Upper lobe of right lung (tissue), 1 donor: ENCODE measurements at regions of chr12 and their contacts with region 1.

Region 1: GRCh38 chr12:2583091-2583497 is 211.7 kb upstream of the FKBP4 start:
- DNase-seq: peak; percentile 84
- ATAC-seq: peak; percentile 93
- H3K4me3 ChIP-seq: no peak overlapping the region
- H3K27ac ChIP-seq: no peak overlapping the region
- H3K4me1 ChIP-seq: peaks cover 6% of the 10 kb centered on the region
- H3K27me3 ChIP-seq: peaks cover 4% of the 10 kb centered on the region
- CTCF ChIP-seq: peak; percentile 88

Region 2: GRCh38 chr12:2057041-2057794 is 525.9 kb before region 1 on chr12:
- intact Hi-C with region 1: loop called (anchors 10 kb)
- DNase-seq: no peak
- ATAC-seq: peak; percentile 17
- H3K4me3 ChIP-seq: no peak overlapping the region
- H3K27ac ChIP-seq: no peak overlapping the region
- H3K4me1 ChIP-seq: peaks cover 13% of the 10 kb centered on the region
- H3K27me3 ChIP-seq: peaks cover 34% of the 10 kb centered on the region
- CTCF ChIP-seq: peak; percentile 63

Region 3: DNA sequence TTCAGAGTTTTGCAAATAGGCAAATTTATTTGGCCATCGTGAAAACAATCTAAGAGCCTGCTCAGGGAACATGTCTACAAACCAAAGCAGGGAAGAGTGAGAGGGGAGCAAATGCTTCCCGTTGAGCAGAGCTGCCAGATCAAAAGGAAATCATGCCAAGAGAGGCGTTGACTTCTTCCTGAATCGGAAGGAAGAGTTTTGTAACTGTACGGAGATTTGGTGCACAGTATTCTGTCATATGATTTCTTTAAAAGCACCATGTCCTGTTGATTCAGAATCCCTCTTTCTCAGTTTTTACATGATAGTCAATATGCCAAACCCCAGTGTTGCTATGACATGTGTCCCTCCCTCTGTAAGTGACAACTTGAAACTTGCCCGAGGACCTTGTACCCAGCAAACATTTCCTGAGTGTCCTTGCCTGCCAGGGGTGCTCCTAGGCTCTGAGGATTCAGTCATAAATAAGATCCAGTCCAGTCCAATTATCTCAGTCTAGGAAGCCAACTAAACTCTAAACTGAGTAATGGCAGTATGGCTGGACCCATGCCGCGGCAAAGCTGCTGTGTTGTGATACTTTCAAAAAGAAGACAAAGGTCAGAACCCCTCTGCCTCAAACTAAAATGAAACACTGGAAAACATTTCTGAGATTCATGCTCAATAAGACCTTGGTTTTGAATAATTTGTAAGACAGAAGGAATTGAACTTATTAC is 88.5 kb before region 1 on chr12:
- intact Hi-C with region 1: no loop called
- DNase-seq: no peak
- ATAC-seq: peak; percentile 75
- H3K4me3 ChIP-seq: no peak overlapping the region
- H3K27ac ChIP-seq: peak overlapping the region; percentile 52
- H3K4me1 ChIP-seq: peaks cover 30% of the 10 kb centered on the region
- H3K27me3 ChIP-seq: no peaks in the 10 kb centered on the region
- CTCF ChIP-seq: no peak

Region 4: DNA sequence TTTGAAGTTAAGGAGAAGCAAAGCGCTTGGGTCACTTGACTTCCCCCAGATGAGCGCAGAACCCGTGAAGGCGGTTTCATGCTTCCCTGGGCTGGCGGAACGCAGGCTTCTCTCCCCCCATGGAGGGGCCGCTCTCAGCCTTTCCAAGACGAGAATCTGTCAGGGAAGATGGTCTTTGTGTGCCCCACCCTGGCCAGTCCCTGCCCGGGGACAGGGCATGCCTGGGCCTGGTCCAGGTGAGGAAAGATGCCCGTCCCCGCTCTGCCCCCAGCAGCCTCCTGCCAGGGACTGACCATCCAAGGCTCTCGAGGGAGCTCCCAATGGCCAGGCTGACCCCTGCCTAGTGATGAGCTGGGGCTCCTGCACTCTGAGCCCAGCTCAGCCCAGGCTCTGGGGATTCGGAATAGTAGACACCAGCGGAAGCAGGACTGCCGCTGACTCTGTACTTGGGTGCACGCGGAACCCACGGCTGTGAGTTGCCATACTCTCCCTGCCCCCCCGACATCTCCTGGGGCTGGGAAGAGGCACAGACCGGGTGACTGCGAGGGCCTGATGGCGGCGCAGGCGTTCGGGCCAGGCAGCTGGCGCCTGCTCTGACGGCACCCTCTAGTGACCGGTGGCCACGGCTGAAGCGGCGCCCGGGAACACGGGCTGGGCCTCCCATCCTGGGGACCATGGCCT is 69.4 kb after region 1 on chr12:
- intact Hi-C with region 1: no loop called
- DNase-seq: peak; percentile 25
- ATAC-seq: peak; percentile 7
- H3K4me3 ChIP-seq: no peak overlapping the region
- H3K27ac ChIP-seq: no peak overlapping the region
- H3K4me1 ChIP-seq: no peaks in the 10 kb centered on the region
- H3K27me3 ChIP-seq: peaks cover 9% of the 10 kb centered on the region
- CTCF ChIP-seq: no peak